ENCODE measurements at regions of chr19 and their contacts with region 1.

Region 1: GRCh38 chr19:15418588-15419412 is at the start of gene AKAP8L:
- DNase-seq: peak; percentile 99
- ATAC-seq: peak; percentile 98
- total RNA-seq, gene AKAP8L: 76.7 TPM

Region 2: GRCh38 chr19:15432629-15433518 is 14.1 kb after region 1 on chr19:
- intact Hi-C with region 1: loop called (anchors 1 kb)
- DNase-seq: peak; percentile 96
- ATAC-seq: peak; percentile 93

Measured in Right ventricle myocardium inferior (tissue), 1 donor.